Heart right ventricle (tissue), 16 donors: ENCODE measurements at regions of chr9 and their contacts with region 1.

Region 1: DNA sequence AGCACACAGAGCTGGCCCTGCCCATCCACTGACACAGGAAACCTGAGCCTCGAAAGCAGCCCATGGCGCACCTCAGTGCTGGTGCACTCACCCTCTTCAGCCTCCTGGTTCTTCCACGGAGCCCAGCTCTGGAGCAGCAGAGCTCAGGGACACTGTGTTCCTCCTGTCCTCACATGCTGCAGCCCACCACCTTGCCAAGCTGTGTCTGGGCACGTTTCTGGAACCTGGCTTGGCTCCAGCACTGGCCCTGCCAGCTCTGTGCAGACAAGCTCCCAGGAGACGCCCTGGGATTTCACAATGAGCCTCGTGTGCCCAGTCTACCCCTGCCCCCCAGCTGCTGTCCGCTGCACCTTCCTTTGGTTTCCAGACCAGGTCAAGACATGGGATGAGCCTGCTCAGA is 119.5 kb downstream of the SYK start:
- DNase-seq: peak; percentile 77 to 84
- ATAC-seq: peak; percentile 88 to 97 (median 94)
- H3K4me3 ChIP-seq: no peak overlapping the region
- H3K27ac ChIP-seq: peak overlapping the region in 3 of 10 donors; percentile 40 to 65 (median 61)
- H3K4me1 ChIP-seq: peaks cover 0 to 17% (median 8%) of the 10 kb centered on the region in 9 donors
- H3K27me3 ChIP-seq: peaks cover 0 to 7% (median 0%) of the 10 kb centered on the region in 7 donors
- CTCF ChIP-seq: no peak

Region 2: DNA sequence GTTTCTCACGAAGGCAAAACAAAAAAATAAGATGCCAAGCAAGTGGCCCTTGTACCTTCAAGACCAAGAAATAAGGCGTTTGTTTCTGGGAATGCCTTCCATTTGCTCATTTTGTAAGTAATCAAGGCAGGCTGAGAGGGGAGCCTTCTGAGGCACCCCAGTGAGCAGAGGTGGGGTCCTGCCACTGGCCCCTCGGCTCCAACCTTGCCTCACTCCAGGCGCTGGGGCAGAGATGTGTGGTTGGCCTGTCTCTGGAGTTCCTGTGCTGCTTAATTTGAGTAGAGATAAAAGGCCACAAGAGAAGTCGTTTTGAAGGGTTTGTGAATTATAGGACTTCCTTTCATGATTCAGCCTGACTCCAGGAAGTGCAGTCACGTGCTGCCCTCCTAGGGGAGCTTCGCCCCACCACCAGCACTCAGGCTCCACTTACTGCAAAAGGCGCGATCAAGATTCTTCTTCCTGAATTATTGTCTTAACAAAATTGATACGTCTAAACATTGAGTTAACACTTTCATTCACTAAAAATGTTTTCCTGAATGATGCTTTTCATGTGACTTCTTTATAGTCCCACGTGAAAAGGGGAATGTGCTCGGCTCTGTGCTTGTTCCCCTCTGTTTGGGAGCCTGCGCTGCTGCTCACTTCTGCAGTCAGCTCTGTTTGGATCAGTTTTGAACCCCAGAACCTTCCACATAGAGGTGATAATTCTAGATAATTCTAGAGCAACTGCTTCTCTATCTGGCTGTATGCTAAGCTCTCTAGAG is 105.7 kb before region 1 on chr9:
- intact Hi-C with region 1: no loop called
- DNase-seq: no peak
- ATAC-seq: peak in 6 of 8 donors; percentile 44 to 71 (median 58)
- H3K4me3 ChIP-seq: no peak overlapping the region
- H3K27ac ChIP-seq: peak overlapping the region in 1 of 10 donors; percentile 71
- H3K4me1 ChIP-seq: peaks cover 0 to 48% (median 0%) of the 10 kb centered on the region in 9 donors
- H3K27me3 ChIP-seq: peaks cover 0 to 8% (median 2%) of the 10 kb centered on the region in 7 donors
- CTCF ChIP-seq: no peak

Region 3: GRCh38 chr9:90964101-90965020 is 43.2 kb after region 1 on chr9:
- intact Hi-C with region 1: loop called in 1 of 10 experiments (anchors 5 kb)
- DNase-seq: no peak
- ATAC-seq: peak in 6 of 8 donors; percentile 8 to 71 (median 58)
- H3K4me3 ChIP-seq: peak overlapping the region in 3 of 10 donors; percentile 14 to 17 (median 16)
- H3K27ac ChIP-seq: no peak overlapping the region
- H3K4me1 ChIP-seq: peaks cover 0 to 8% (median 0%) of the 10 kb centered on the region in 9 donors
- H3K27me3 ChIP-seq: peaks cover 0 to 41% (median 20%) of the 10 kb centered on the region in 7 donors
- CTCF ChIP-seq: peak in 3 of 9 donors; percentile 22 to 26 (median 24)